Transverse colon (tissue), 4 donors: ENCODE measurements at regions of chr1 and their contacts with region 1.

Region 1: GRCh38 chr1:39105061-39105840 is 79.1 kb downstream of the NDUFS5 start:
- DNase-seq: peak; percentile 84
- H3K4me3 ChIP-seq: peak overlapping the region; percentile 75 to 89 (median 80)
- H3K27ac ChIP-seq: peak overlapping the region; percentile 92 to 97 (median 96)
- H3K4me1 ChIP-seq: peaks cover 16 to 67% (median 26%) of the 10 kb centered on the region in 4 donors
- H3K27me3 ChIP-seq: no peaks in the 10 kb centered on the region
- CTCF ChIP-seq: no peak
- EP300 ChIP-seq: no peak
- POLR2A ChIP-seq: no peak

Region 2: GRCh38 chr1:38953433-38953860 is 151.8 kb before region 1 on chr1:
- in situ Hi-C with region 1: no loop called
- intact Hi-C with region 1: no loop called
- DNase-seq: no peak
- H3K4me3 ChIP-seq: no peak overlapping the region
- H3K27ac ChIP-seq: no peak overlapping the region
- H3K4me1 ChIP-seq: no peaks in the 10 kb centered on the region
- H3K27me3 ChIP-seq: no peaks in the 10 kb centered on the region
- CTCF ChIP-seq: no peak
- EP300 ChIP-seq: no peak
- POLR2A ChIP-seq: no peak

Region 3: DNA sequence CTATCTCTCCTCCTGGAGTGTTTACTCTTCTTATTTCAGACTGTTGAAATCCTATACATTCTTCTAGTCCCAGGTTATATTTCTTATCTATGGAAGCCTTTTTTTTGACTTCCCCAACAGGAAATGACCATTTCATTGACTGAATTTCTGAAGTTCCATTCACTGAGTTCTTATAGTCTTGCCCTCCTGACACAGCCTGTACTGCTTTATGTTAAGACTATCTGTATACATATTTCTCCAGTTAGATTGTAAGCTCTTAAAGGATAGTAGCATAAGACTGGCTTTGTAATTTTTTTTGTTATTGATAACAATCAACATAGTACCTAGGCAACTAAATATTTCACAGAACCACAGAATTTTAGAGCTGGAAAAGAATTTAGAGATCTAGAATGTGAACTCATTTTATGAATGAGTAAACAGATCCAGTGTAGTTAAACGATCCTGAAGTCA is 84.4 kb after region 1 on chr1:
- in situ Hi-C with region 1: loop called in 3 of 4 experiments (anchors 5 to 10 kb)
- intact Hi-C with region 1: loop called (anchors 2 kb)
- DNase-seq: no peak
- H3K4me3 ChIP-seq: no peak overlapping the region
- H3K27ac ChIP-seq: peak overlapping the region; percentile 18 to 86 (median 42)
- H3K4me1 ChIP-seq: peaks cover 11 to 52% (median 23%) of the 10 kb centered on the region in 4 donors
- H3K27me3 ChIP-seq: no peaks in the 10 kb centered on the region
- CTCF ChIP-seq: no peak
- EP300 ChIP-seq: no peak
- POLR2A ChIP-seq: no peak

Region 4: GRCh38 chr1:39268112-39268581 is 162.9 kb after region 1 on chr1:
- in situ Hi-C with region 1: loop called (anchors 5 to 10 kb)
- intact Hi-C with region 1: loop called (anchors 5 kb)
- DNase-seq: peak; percentile 20
- H3K4me3 ChIP-seq: peak overlapping the region; percentile 3 to 30 (median 9)
- H3K27ac ChIP-seq: peak overlapping the region; percentile 78 to 88 (median 84)
- H3K4me1 ChIP-seq: peaks cover 7 to 54% (median 27%) of the 10 kb centered on the region in 4 donors
- H3K27me3 ChIP-seq: no peaks in the 10 kb centered on the region
- CTCF ChIP-seq: no peak
- EP300 ChIP-seq: no peak
- POLR2A ChIP-seq: peak; percentile 39